Motor neuron (in vitro differentiated cells): ENCODE measurements at regions of chr4 and their contacts with region 1.

Region 1: GRCh38 chr4:94127707-94128328 is 79.8 kb upstream of the SMARCAD1 start:
- ATAC-seq: peak in 3 of 8 experiments; percentile 40 to 49 (median 43)
- H3K4me3 ChIP-seq: no peak overlapping the region
- H3K27ac ChIP-seq: no peak overlapping the region
- H3K4me1 ChIP-seq: no peaks in the 10 kb centered on the region

Region 2: DNA sequence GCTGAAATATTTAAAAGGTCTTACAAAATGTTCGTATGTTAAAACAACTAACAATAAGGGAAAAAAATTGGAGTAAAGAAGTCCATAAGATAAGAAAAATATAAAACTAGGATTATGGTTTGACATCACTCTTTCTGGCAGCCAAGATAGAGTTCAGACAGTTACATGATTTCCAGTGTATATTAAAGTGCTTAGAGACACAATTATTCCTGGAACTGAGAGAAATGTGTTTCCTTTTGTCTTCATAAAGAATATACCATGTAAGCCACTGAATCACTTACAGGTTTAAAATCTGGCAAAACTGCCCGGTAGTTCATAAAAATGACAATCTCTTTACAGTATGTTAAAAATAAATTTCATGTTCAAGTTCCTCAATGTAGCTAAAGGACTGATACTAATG is 838.0 kb before region 1 on chr4:
- in situ Hi-C with region 1: no loop called
- ATAC-seq: no peak
- H3K4me3 ChIP-seq: no peak overlapping the region
- H3K27ac ChIP-seq: no peak overlapping the region
- H3K4me1 ChIP-seq: no peaks in the 10 kb centered on the region

Region 3: DNA sequence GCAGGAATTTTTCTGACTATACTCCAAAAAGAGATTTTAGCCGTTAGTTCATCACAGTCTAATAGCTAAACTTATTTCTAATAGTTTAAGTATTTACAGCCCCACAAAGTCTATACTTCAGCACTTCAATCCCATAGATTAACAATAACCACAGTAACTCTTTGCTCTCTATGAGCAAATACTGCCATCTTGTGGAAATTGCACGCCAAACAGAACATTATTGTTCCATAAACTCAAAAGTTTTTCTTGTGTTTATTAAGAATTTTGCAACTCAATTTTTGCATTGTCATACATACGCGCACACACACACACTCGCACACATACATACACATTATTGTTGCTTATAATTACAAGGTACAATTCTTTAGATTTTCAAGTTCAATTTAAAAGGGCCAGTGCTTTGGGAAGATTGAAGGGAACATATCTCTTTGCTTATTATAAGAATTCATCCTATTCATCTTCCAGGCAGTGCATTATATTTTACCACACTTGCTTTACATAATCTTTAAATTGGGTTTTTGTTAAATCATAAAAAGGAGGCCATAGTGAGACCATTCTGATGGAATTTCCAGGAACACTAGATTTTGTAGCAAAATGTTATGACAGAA is 363.1 kb before region 1 on chr4:
- in situ Hi-C with region 1: no loop called
- ATAC-seq: peak; percentile 47 to 70 (median 63)
- H3K4me3 ChIP-seq: no peak overlapping the region
- H3K27ac ChIP-seq: no peak overlapping the region
- H3K4me1 ChIP-seq: peaks cover 0 to 3% of the 10 kb centered on the region in 2 donors

Region 4: GRCh38 chr4:93791570-93792195 is 336.1 kb before region 1 on chr4:
- in situ Hi-C with region 1: loop called in 2 of 9 experiments (anchors 25 kb)
- ATAC-seq: peak; percentile 36 to 77 (median 68)
- H3K4me3 ChIP-seq: no peak overlapping the region
- H3K27ac ChIP-seq: no peak overlapping the region
- H3K4me1 ChIP-seq: peaks cover 0 to 2% of the 10 kb centered on the region in 2 donors

Region 5: GRCh38 chr4:93814722-93815121 is 313.1 kb before region 1 on chr4:
- in situ Hi-C with region 1: loop called in 2 of 9 experiments (anchors 25 kb)
- ATAC-seq: no peak
- H3K4me3 ChIP-seq: no peak overlapping the region
- H3K27ac ChIP-seq: no peak overlapping the region
- H3K4me1 ChIP-seq: no peaks in the 10 kb centered on the region